ENCODE measurements at regions of chr12 and their contacts with region 1.

Region 1: DNA sequence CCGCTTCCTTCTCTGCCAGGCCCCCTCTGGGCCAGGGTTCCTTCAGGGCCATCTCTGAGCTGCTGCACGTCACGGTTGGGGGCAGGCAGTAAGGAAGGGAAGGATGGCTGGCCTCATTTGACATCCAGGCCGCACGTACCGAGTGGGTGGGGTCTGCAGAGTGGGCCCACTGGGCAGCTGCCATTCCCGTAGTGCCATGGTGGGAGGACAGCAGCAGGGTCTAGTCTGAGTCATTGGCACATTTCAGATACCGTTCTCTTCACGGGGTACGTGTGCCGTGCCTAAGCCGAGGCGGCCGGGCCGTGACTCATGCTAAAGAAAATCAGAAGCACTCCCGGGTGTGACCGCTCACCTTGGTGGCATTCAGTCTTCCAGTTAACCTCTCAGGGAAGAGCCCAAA is 43.9 kb downstream of the IL31 start:
- DNase-seq: peak; percentile 61
- H3K4me3 Mint-ChIP-seq: no peak overlapping the region
- H3K27ac Mint-ChIP-seq: no peak overlapping the region
- H3K4me1 Mint-ChIP-seq: peaks cover 5% of the 10 kb centered on the region
- H3K27me3 Mint-ChIP-seq: no peaks in the 10 kb centered on the region
- CTCF ChIP-seq: no peak

Region 2: DNA sequence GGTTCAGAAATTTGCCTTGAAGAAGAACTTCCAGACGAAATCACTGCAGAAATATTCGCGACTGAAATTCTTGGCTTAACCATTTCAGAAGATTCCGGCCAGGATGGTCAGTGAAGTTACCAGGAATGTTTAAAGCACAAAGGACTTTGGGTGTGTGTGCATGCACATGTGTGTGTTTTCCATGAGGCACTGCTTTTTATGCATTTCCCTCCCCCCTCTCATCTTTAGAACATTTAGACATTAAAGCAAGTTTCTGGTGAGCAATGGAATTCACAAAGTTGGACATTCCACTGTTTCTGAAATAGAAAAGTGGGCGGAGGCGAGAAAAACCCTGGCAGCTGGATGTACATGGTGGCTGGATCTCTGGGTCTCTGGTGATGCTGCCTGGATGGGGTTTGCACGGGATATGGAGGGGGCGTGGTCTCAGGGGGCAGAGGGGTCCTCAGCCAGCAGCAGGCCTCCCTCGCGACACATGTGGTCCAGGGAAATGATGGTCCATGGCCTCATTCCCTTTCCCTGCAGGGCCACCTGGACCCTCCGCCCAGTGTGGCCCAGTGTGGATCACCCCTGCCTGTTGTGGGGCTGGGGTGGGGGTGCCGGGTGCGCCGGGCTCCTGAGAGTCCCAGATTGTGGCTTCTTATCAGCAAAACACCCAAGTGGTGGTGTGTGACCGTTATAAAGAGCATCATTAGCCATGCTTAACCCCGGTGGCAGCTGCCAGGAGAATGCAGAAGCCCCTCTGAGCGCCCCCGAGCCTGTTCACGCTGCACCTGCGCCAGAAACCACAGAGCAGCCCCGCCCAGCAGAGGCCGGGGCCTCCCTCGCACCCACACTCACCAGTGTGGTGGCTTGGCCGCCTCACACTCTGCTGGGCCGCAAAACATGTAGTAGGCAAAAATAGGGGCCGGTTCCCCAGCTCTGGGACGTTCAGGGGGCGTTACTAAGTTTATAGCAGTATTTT is 126.2 kb before region 1 on chr12:
- CTCF ChIA-PET with region 1: no interaction called
- POLR2A ChIA-PET with region 1: no interaction called
- intact Hi-C with region 1: no loop called
- DNase-seq: no peak
- H3K4me3 Mint-ChIP-seq: no peak overlapping the region
- H3K27ac Mint-ChIP-seq: no peak overlapping the region
- H3K4me1 Mint-ChIP-seq: peaks cover 6% of the 10 kb centered on the region
- H3K27me3 Mint-ChIP-seq: no peaks in the 10 kb centered on the region
- CTCF ChIP-seq: no peak

Region 3: DNA sequence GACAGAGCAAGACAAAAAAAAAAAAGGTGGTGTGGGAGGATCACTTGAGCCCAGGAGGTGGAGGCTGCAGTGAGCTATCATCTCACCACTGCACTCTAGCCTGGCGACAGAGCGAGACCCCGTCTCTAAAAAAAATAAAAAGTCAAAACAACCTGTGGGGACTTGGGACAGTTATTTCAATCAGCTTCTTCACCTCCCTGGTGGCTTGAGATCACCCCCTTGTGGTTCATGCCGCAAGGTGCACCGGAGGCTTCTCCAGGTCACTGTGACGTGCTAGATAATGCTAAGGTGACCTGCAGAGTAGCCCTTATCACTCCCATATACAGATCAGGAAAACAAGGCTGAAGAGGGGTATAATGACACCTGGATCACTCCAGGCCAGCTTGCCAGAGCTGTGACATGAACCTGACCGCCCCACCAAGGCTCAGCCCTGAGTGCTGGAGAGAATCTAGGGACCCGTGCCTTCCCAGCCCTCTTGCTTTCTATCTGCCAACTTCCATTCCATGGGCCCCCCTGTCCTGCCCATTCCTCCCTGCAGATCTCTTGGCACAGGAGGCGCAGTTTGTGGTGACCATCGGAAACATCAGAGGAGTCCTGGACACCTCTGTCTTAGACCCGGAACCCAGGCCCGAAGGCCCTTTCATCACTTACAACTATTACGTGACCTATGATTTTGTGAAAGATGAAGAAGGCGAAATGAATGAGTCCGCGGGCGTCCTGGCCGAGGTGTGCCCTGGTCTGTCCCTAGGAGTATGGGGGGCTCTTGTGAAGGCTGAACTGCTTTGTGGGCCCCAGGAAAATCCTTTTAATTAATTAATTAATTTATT is 60.9 kb after region 1 on chr12:
- CTCF ChIA-PET with region 1: interaction called, 15 read pairs
- POLR2A ChIA-PET with region 1: interaction called, 4 read pairs
- intact Hi-C with region 1: loop called (anchors 1 kb)
- DNase-seq: peak; percentile 67
- H3K4me3 Mint-ChIP-seq: no peak overlapping the region
- H3K27ac Mint-ChIP-seq: no peak overlapping the region
- H3K4me1 Mint-ChIP-seq: no peaks in the 10 kb centered on the region
- H3K27me3 Mint-ChIP-seq: no peaks in the 10 kb centered on the region
- CTCF ChIP-seq: peak; percentile 83

Region 4: DNA sequence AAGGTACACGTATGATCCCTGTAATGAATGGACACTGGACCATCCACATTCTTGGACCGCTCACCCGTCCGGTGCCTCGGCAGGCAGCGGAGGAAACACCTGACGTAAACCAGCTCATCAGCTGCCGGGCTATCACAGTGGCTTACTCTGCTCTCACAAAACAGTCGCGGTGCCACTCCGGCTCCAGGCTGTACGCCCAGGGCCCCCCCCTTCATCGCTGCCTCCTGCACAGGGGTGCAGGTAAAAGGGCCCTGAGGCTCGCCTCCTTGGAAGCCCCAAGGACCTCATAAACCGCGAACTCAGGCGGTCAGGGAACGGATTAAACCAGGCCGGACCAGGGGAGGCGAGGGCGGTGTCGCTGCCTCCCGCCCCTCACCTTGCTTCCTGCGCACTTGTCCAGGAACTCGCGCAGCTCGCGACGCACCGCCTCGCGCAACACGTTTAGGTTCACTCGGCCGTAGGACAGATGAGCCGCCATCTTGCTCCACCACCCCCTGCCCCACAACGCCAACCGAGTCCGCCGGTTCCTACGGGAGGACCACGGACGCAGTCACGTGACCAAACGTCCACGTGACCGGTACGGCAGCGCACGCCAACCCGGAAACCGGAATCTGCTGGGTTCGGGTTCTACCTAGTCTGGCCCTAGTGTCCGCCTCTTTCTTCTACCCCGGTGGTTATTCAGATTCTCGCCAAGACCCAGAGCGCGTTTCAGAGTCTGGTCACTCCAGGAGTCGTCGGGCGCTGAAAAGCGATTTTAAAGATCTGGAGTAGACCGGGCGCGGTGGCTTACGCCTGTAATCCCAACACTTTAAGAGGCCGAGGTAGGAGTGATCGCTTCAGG is 136.0 kb after region 1 on chr12 and contains the start of gene VPS33A:
- CTCF ChIA-PET with region 1: interaction called, 4 read pairs
- POLR2A ChIA-PET with region 1: no interaction called
- intact Hi-C with region 1: loop called (anchors 1 kb)
- DNase-seq: peak; percentile 94
- H3K4me3 Mint-ChIP-seq: peak within 1 kb of the TSS; percentile 96
- H3K27ac Mint-ChIP-seq: peak within 1 kb of the TSS; percentile 95
- H3K4me1 Mint-ChIP-seq: no peaks in the 10 kb centered on the region
- H3K27me3 Mint-ChIP-seq: no peaks in the 10 kb centered on the region
- CTCF ChIP-seq: no peak
- total RNA-seq, gene VPS33A: 16.5 and 22.2 TPM in 2 replicates

Region 5: DNA sequence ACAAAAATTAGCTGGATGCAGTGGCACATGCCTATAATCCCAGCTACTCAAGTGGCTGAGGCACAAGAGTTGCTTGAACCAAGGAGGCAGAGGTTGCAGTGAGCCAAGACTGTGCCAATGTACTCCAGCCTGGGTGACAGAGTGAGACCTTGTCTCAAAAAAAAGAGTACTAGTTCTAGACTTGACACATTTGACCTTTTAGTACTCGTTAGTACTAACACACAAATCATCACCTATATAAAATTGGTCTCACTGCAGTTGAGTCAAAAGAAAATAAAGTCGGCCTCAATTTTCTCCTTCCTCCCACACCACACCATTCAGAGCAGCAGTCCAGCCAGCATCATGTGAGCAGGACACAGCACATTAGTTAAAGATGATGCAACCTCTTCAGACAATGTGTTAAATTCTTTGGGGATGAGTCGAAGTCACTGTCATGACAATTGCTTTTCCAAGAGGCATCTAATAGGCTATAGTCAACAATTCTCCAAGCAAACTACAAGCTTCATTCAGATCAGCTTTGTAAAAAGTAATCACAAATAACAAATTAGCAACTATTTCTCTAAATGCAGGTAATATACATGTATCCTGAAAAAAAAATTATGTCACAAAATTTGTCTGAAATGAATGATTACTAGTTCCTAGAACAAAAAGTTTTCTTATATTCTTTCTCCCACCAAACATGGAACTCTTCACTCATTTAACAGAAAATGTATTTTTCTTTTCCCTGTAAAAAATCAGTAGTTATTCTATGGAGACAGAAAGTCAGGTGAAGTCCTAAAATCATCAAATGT is 236.7 kb after region 1 on chr12:
- CTCF ChIA-PET with region 1: no interaction called
- POLR2A ChIA-PET with region 1: no interaction called
- intact Hi-C with region 1: no loop called
- DNase-seq: peak; percentile 86
- H3K4me3 Mint-ChIP-seq: peak overlapping the region; percentile 18
- H3K27ac Mint-ChIP-seq: peak overlapping the region; percentile 95
- H3K4me1 Mint-ChIP-seq: peaks cover 24% of the 10 kb centered on the region
- H3K27me3 Mint-ChIP-seq: no peaks in the 10 kb centered on the region
- CTCF ChIP-seq: no peak